PC-9 (cell line): ENCODE measurements at regions of chr15 and their contacts with region 1.

Region 1: DNA sequence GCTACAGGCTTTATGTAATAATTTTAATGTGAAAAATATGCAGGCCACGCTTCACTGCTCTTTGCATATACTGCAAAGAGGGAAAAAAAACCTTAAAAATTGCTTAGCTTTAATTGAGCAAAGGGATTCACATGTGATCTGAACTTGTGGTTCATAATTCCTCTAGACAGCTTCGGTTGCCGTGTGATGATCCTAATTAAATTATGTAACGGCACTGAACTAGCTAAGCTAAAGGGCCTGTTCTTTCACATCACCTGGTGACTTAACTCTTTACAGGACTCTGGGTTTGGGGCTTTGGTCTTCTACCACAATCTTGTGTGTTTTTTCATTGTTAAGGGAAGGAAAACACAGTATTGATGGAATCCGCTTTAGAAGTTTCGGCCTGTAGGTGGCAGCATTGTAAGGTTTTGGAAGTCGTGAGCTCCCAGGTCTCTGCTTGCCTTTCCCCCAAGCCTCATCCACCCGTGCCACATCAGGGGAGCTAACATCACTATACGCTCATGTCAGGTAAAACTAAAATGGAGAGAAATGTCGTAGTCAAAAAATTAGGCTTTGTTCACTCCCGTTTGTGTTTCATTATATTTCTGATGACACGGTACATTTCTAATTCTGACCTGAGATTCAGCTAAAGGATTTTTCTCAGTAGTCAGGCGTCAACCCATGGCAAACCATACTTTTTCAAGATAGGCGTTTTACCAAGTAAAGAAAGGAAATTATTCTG is 205.6 kb upstream of the DPH6 start:
- DNase-seq: peak in 1 of 2 experiments; percentile 54
- H3K4me3 ChIP-seq: no peak overlapping the region
- H3K27ac ChIP-seq: no peak overlapping the region
- H3K4me1 ChIP-seq: no peaks in the 10 kb centered on the region
- H3K27me3 ChIP-seq: no peaks in the 10 kb centered on the region
- CTCF ChIP-seq: peak; percentile 71

Region 2: GRCh38 chr15:35496585-35496984 is 255.0 kb before region 1 on chr15:
- CTCF ChIA-PET with region 1: interaction called, 11 read pairs
- POLR2A ChIA-PET with region 1: no interaction called
- intact Hi-C with region 1: no loop called
- DNase-seq: no peak
- H3K4me3 ChIP-seq: no peak overlapping the region
- H3K27ac ChIP-seq: no peak overlapping the region
- H3K4me1 ChIP-seq: no peaks in the 10 kb centered on the region
- H3K27me3 ChIP-seq: no peaks in the 10 kb centered on the region
- CTCF ChIP-seq: no peak